ENCODE measurements at regions of chr7 and their contacts with region 1.

Region 1: GRCh38 chr7:33109005-33109757 is at the start of gene RP9:
- DNase-seq: peak; percentile 78
- ATAC-seq: peak; percentile 93
- H3K4me3 Mint-ChIP-seq: peak within 1 kb of the TSS; percentile 88
- H3K27ac Mint-ChIP-seq: peak within 1 kb of the TSS; percentile 70
- H3K4me1 Mint-ChIP-seq: peaks cover 30% of the 10 kb centered on the region
- H3K27me3 Mint-ChIP-seq: peaks cover 7% of the 10 kb centered on the region
- CTCF ChIP-seq: peak; percentile 52
- total RNA-seq, gene RP9: 14.2 to 15.4 TPM

Region 2: GRCh38 chr7:32515890-32516550 is 593.2 kb before region 1 on chr7:
- CTCF ChIA-PET with region 1: no interaction called
- POLR2A ChIA-PET with region 1: no interaction called
- intact Hi-C with region 1: no loop called
- DNase-seq: peak; percentile 53
- ATAC-seq: peak; percentile 87
- H3K4me3 Mint-ChIP-seq: no peak overlapping the region
- H3K27ac Mint-ChIP-seq: peak overlapping the region; percentile 83
- H3K4me1 Mint-ChIP-seq: peaks cover 67% of the 10 kb centered on the region
- H3K27me3 Mint-ChIP-seq: no peaks in the 10 kb centered on the region
- CTCF ChIP-seq: no peak

Region 3: GRCh38 chr7:32765185-32765584 is 344.0 kb before region 1 on chr7:
- CTCF ChIA-PET with region 1: interaction called, 12 read pairs
- POLR2A ChIA-PET with region 1: no interaction called
- intact Hi-C with region 1: no loop called
- DNase-seq: no peak
- ATAC-seq: no peak
- H3K4me3 Mint-ChIP-seq: no peak overlapping the region
- H3K27ac Mint-ChIP-seq: no peak overlapping the region
- H3K4me1 Mint-ChIP-seq: peaks cover 13% of the 10 kb centered on the region
- H3K27me3 Mint-ChIP-seq: peaks cover 43% of the 10 kb centered on the region
- CTCF ChIP-seq: no peak

Region 4: GRCh38 chr7:32891800-32892520 is 217.2 kb before region 1 on chr7:
- CTCF ChIA-PET with region 1: interaction called, 13 read pairs
- POLR2A ChIA-PET with region 1: interaction called, 5 read pairs
- intact Hi-C with region 1: no loop called
- DNase-seq: peak; percentile 99
- ATAC-seq: peak; percentile 69
- H3K4me3 Mint-ChIP-seq: peak overlapping the region; percentile 94
- H3K27ac Mint-ChIP-seq: peak overlapping the region; percentile 100
- H3K4me1 Mint-ChIP-seq: peaks cover 43% of the 10 kb centered on the region
- H3K27me3 Mint-ChIP-seq: no peaks in the 10 kb centered on the region
- CTCF ChIP-seq: no peak

Region 5: GRCh38 chr7:33050535-33051318 is 58.5 kb before region 1 on chr7:
- CTCF ChIA-PET with region 1: interaction called, 20 read pairs
- POLR2A ChIA-PET with region 1: interaction called, 3 read pairs
- intact Hi-C with region 1: no loop called
- DNase-seq: peak; percentile 39
- ATAC-seq: peak; percentile 64
- H3K4me3 Mint-ChIP-seq: no peak overlapping the region
- H3K27ac Mint-ChIP-seq: no peak overlapping the region
- H3K4me1 Mint-ChIP-seq: peaks cover 47% of the 10 kb centered on the region
- H3K27me3 Mint-ChIP-seq: no peaks in the 10 kb centered on the region
- CTCF ChIP-seq: peak; percentile 71

Region 6: DNA sequence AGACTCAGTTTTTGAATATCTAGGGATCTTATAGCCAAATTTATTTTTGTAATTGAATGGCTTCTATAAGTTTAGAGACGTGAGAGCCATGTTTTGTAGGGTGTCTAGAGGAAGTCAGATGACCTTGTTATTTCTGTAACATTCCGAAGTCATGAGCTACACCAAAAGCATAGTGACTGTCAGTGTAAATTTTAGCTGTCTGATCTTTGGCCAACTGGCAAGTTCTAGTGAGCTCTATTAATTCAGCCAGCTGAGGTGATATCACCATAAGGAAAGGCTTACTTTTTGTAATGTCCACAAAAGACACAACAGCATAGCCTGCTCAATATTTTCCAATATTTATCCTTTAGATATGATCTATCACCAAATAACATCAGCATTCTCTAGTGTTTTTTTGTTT is 36.7 kb before region 1 on chr7:
- CTCF ChIA-PET with region 1: interaction called, 20 read pairs
- POLR2A ChIA-PET with region 1: no interaction called
- intact Hi-C with region 1: no loop called
- DNase-seq: no peak
- ATAC-seq: no peak
- H3K4me3 Mint-ChIP-seq: no peak overlapping the region
- H3K27ac Mint-ChIP-seq: no peak overlapping the region
- H3K4me1 Mint-ChIP-seq: peaks cover 10% of the 10 kb centered on the region
- H3K27me3 Mint-ChIP-seq: peaks cover 15% of the 10 kb centered on the region
- CTCF ChIP-seq: no peak

Region 7: GRCh38 chr7:33128990-33129805 is 20.0 kb after region 1 on chr7 and contains the start of gene BBS9:
- CTCF ChIA-PET with region 1: interaction called, 75 read pairs
- POLR2A ChIA-PET with region 1: no interaction called
- intact Hi-C with region 1: no loop called
- DNase-seq: peak; percentile 95
- ATAC-seq: peak; percentile 98
- H3K4me3 Mint-ChIP-seq: peak within 1 kb of the TSS; percentile 96
- H3K27ac Mint-ChIP-seq: peak within 1 kb of the TSS; percentile 84
- H3K4me1 Mint-ChIP-seq: peaks cover 19% of the 10 kb centered on the region
- H3K27me3 Mint-ChIP-seq: no peaks in the 10 kb centered on the region
- CTCF ChIP-seq: no peak
- total RNA-seq, gene BBS9: 6.0 to 7.7 TPM

Region 8: GRCh38 chr7:33805630-33806233 is 696.6 kb after region 1 on chr7:
- CTCF ChIA-PET with region 1: no interaction called
- POLR2A ChIA-PET with region 1: no interaction called
- intact Hi-C with region 1: no loop called
- DNase-seq: no peak
- ATAC-seq: no peak
- H3K4me3 Mint-ChIP-seq: no peak overlapping the region
- H3K27ac Mint-ChIP-seq: no peak overlapping the region
- H3K4me1 Mint-ChIP-seq: no peaks in the 10 kb centered on the region
- H3K27me3 Mint-ChIP-seq: no peaks in the 10 kb centered on the region
- CTCF ChIP-seq: no peak

Measured in activated CD8-positive, alpha-beta T cell treated with anti-CD3 and anti-CD28 coated beads for 36 hours (primary cell).